Activated naive CD4-positive, alpha-beta T cell treated with anti-CD3 and anti-CD28 coated beads for 36 hours (primary cell): ENCODE measurements at regions of chr2 and their contacts with region 1.

Region 1: DNA sequence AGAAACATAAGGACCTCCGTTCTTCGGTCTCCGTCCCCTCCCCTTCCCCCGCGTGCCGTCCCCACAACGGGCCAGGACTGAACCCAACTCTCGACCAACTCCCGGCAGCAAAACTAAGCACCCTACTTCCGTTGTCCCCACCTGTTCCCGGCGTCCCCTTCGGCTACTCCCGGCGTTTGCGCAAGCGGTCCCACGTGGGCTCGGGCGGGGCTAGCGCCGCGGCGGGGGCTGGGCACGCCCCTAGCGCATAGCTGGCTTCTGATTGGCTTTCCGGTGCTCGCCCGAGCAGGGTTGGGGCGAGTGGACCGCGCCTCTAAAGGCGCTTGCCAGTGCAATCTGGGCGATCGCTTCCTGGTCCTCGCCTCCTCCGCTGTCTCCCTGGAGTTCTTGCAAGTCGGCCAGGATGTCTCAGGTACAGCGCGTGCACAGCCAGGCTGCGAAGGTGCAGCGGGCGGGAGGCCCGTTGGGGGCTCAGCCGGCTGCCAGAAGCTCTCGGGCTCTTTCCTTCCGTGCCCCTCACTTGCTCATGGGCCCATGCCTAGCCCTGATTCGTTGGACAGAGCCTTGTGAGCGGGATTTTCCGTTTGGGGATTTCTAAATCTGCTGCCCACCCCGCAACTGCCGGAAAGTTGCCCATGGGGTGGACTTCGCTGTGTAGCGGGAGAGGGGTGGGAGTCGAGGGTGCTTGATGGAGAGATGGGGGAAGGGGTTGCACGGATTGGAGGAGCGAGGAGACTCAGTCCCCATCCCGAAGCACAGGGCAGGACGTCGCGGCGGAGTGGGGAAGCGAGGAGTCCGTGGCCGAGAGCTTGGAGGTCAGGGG is at the starts of genes C2orf76 and DBI:
- DNase-seq: peak; percentile 94
- H3K4me3 Mint-ChIP-seq: peak within 1 kb of the TSS; percentile 99
- H3K27ac Mint-ChIP-seq: peak within 1 kb of the TSS; percentile 92
- H3K4me1 Mint-ChIP-seq: peaks cover 42% of the 10 kb centered on the region
- H3K27me3 Mint-ChIP-seq: no peaks in the 10 kb centered on the region
- total RNA-seq, gene C2orf76: 9.5 to 11.1 TPM
- total RNA-seq, gene DBI: 133 to 134 TPM

Region 2: DNA sequence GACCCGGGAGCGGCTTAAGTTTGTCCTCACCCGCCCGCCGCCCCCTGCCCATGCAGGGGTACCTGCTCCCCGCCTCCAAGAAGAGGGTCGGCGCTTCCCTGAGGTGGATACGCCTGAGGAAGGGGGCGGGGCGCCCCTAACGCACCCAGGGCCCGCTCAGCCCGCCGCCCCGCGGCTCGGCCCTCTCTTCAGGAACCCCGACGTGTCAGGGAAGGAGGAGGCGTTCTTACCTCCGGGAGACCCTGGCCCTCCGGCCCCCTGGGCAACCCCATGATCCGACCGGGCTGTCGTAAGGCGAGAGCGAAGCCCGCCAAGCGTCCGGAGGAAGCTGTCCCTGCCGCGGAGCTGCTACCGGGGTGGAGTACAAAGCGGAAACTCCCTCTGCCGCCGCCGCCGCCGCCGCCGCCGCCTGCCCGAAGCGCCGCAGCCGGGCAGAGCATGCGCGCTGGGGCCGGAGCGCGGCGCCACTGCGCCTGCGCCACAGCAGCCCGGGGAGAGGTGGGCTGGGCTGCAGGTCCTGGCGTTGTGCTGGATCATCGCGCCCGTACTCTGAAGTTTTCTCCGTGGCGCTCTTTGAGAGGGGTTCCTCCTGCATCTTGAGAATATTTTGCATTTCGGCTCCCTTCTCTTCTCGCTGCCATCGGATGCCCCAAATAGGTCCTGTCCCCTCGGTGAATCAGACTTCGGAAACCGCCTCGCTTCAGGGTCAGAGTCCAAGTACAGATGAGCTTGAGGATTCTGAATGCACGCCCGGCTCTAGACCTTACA is 1353.0 kb before region 1 on chr2 and contains the start of gene CCDC93:
- CTCF ChIA-PET with region 1: no interaction called
- intact Hi-C with region 1: loop called (anchors 5 kb)
- DNase-seq: peak; percentile 85
- H3K4me3 Mint-ChIP-seq: peak within 1 kb of the TSS; percentile 95
- H3K27ac Mint-ChIP-seq: peak within 1 kb of the TSS; percentile 83
- H3K4me1 Mint-ChIP-seq: peaks cover 38% of the 10 kb centered on the region
- H3K27me3 Mint-ChIP-seq: no peaks in the 10 kb centered on the region
- total RNA-seq, gene CCDC93: 29.0 to 32.8 TPM

Region 3: DNA sequence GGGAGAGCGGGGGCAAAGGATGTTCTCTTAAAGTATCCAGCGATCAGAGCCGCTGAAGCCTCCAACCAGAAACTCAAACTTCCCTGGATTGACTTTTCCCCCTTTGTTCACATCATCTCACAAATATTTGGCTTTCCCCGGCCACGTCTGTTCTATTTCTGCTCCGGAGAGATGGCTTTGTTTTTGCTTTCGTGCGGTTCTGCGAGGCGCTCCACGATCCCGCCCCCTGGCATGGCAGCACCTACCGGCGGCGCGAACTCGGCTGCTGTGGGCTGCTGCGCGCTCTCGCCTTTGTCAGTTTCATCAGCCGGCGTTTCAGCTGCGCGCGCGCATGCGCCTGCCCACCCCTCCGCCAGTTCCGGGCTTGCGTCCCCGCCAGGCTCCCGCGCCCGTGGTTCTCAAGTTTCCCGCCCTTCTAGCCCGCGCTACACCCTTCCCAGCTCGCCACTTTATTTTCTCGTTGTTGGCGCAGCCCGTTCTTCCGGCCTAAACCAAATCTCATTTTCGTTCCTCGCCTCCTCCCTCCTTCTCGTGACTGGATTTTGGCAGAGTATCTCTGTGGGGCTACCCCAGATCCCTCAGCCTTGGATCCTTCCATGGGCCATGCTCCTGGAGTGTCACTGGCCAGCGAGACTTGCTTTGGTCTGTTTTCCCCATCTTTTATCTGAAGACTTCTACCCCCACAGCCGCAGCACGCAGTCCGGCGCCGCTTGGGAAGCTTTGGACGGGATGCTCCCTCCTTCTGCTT is 1180.6 kb before region 1 on chr2:
- CTCF ChIA-PET with region 1: no interaction called
- intact Hi-C with region 1: loop called (anchors 2 kb)
- DNase-seq: peak; percentile 90
- H3K4me3 Mint-ChIP-seq: peak overlapping the region; percentile 92
- H3K27ac Mint-ChIP-seq: peak overlapping the region; percentile 97
- H3K4me1 Mint-ChIP-seq: peaks cover 14% of the 10 kb centered on the region
- H3K27me3 Mint-ChIP-seq: no peaks in the 10 kb centered on the region

Region 4: GRCh38 chr2:119678998-119679710 is 312.3 kb after region 1 on chr2 and contains the start of gene TMEM177:
- CTCF ChIA-PET with region 1: no interaction called
- intact Hi-C with region 1: loop called (anchors 2 kb)
- DNase-seq: peak; percentile 89
- H3K4me3 Mint-ChIP-seq: peak within 1 kb of the TSS; percentile 81
- H3K27ac Mint-ChIP-seq: peak within 1 kb of the TSS; percentile 62
- H3K4me1 Mint-ChIP-seq: peaks cover 41% of the 10 kb centered on the region
- H3K27me3 Mint-ChIP-seq: no peaks in the 10 kb centered on the region
- total RNA-seq, gene TMEM177: 11.9 to 13.3 TPM

Region 5: DNA sequence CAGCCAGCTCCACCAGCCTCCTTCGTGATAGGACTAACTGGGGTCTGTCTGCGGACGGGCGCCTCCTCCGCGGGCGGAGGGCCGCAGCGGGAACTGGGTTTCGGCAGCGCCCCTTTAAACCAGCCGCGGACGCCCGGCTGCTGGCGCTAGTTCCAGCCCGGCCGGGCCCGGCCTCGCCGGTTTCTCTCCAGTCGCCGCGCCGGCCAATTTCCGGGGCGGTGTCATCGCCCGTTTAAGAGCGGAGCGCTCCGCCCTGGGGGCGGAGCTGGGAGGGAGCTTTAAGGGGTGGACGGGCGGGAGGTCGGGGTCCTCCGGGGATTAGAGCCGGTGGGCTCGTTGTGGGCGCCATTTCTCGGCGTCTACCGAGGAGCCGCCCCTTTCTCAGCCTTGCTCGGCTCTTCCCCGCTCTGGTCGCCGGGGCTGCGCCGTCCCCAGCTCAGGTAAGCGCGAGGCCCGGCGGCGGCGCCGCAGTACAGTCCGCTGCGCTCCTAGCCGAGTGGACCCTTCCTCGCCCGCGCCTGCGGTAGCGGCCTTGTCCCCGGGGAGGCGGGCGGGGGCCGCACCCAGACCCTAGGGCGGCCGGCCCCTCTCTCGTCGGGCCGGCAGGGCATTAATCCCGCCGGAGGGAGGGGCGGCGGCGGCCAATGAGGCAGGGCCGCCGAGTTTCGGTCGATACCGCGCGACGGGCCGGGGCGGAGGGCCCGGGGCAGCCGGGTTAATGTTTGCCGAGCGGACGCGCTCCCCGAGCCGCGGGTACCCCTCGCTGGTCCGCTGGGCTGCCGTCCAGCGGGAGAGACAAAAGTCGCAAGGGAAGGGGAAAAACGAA is 646.1 kb after region 1 on chr2 and contains the start of gene EPB41L5:
- CTCF ChIA-PET with region 1: no interaction called
- intact Hi-C with region 1: loop called (anchors 2 kb)
- DNase-seq: peak; percentile 79
- H3K4me3 Mint-ChIP-seq: peak within 1 kb of the TSS; percentile 77
- H3K27ac Mint-ChIP-seq: no peak within 1 kb of the TSS
- H3K4me1 Mint-ChIP-seq: peaks cover 8% of the 10 kb centered on the region
- H3K27me3 Mint-ChIP-seq: no peaks in the 10 kb centered on the region
- total RNA-seq, gene EPB41L5: 2.3 to 2.5 TPM